ENCODE measurements at regions of chr11 and their contacts with region 1.

Region 1: GRCh38 chr11:108170184-108170583 is 48.8 kb downstream of the ACAT1 start:
- DNase-seq: no peak
- H3K4me3 ChIP-seq: no peak overlapping the region
- CTCF ChIP-seq: no peak

Region 2: GRCh38 chr11:108131993-108132392 is 38.2 kb before region 1 on chr11:
- in situ Hi-C with region 1: loop called (anchors 5 kb)
- DNase-seq: no peak
- H3K4me3 ChIP-seq: no peak overlapping the region
- CTCF ChIP-seq: no peak

Region 3: DNA sequence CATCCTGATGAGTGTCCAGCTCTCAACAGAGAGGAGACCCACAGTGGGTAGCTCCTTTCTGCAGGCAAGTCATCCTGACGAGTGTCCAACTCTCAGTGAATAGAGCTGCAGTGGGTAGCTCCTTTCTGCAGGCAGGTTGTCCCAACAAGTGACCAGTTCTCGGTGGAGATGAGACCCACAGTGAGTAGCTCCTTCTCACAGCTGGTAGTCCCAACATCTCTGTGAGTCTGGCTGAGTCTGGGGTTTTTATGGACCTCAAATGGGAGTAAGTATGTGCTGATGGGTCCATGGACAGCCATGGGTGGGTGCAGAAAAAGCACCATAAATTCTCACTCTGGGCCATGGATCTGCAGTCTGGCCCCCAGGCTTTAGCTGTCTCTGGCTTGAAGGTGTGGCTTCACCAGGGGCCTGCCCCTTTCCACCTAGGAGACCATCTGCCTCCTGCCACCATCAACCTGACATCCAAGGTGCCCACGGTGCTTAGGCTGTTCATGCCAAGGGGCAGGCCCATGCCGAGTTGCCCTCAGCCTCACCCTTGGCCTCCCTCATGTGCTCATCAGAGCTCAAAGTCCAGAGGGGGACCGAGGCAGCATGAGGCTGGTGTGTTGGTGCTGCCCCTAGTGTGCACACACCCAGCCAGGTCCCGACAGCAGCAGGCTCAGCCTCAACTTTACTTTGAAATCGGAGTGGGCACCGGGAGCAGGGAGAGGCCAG is 36.9 kb after region 1 on chr11:
- in situ Hi-C with region 1: no loop called
- DNase-seq: no peak
- H3K4me3 ChIP-seq: no peak overlapping the region
- CTCF ChIP-seq: no peak

Region 4: DNA sequence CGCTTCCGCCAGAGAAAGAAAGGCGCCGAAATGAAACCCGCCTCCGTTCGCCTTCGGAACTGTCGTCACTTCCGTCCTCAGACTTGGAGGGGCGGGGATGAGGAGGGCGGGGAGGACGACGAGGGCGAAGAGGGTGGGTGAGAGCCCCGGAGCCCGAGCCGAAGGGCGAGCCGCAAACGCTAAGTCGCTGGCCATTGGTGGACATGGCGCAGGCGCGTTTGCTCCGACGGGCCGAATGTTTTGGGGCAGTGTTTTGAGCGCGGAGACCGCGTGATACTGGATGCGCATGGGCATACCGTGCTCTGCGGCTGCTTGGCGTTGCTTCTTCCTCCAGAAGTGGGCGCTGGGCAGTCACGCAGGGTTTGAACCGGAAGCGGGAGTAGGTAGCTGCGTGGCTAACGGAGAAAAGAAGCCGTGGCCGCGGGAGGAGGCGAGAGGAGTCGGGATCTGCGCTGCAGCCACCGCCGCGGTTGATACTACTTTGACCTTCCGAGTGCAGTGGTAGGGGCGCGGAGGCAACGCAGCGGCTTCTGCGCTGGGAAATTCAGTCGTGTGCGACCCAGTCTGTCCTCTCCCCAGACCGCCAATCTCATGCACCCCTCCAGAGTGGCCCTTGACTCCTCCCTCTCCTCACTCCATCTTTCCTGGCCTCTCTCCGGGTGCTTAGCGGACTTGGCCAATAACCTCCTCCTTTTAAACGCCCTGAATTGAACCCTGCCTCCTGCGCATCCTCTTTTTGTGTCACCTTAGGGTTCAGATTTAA is 52.7 kb after region 1 on chr11 and contains the start of gene ATM:
- in situ Hi-C with region 1: no loop called
- DNase-seq: peak; percentile 98
- H3K4me3 ChIP-seq: peak within 1 kb of the TSS; percentile 84
- CTCF ChIP-seq: peak; percentile 84

Measured in astrocyte of the cerebellum (primary cell).